HCT116 (cell line): ENCODE measurements at regions of chr11 and their contacts with region 1.

Region 1: DNA sequence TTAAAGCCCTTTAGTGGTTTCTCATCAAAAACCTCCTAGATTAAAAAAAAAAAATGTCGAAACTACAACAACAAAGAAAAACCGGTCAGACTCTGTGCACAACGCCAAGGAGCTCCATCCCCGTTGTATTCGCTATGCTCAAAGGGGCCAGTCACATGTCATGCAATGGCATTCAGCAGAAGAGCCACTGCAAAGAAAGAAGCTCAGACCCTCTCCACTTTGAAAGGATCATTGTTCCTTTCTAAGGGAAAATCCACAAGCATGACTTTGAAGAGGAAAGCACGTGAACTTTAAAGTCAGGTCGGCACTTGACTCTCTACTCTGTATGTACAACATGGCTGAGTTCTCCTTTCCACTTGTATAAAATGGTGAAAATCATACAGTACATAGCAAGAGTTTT is 655.6 kb downstream of the ETS1 start:
- DNase-seq: no peak
- ATAC-seq: no peak
- H3K4me3 ChIP-seq: no peak overlapping the region
- H3K27ac ChIP-seq: no peak overlapping the region
- H3K4me1 ChIP-seq: no peaks in the 10 kb centered on the region
- H3K27me3 ChIP-seq: no peaks in the 10 kb centered on the region
- CTCF ChIP-seq: no peak
- POLR2A ChIP-seq: no peak
- RAD21 ChIP-seq: no peak

Region 2: GRCh38 chr11:127972816-127973215 is 41.0 kb after region 1 on chr11:
- CTCF ChIA-PET with region 1: no interaction called
- POLR2A ChIA-PET with region 1: no interaction called
- RAD21 ChIA-PET with region 1: no interaction called
- intact Hi-C with region 1: loop called (anchors 1 kb)
- DNase-seq: no peak
- ATAC-seq: no peak
- H3K4me3 ChIP-seq: no peak overlapping the region
- H3K27ac ChIP-seq: no peak overlapping the region
- H3K4me1 ChIP-seq: no peaks in the 10 kb centered on the region
- H3K27me3 ChIP-seq: no peaks in the 10 kb centered on the region
- CTCF ChIP-seq: no peak
- POLR2A ChIP-seq: no peak
- RAD21 ChIP-seq: no peak

Region 3: GRCh38 chr11:128365044-128365443 is 433.2 kb after region 1 on chr11:
- CTCF ChIA-PET with region 1: no interaction called
- POLR2A ChIA-PET with region 1: no interaction called
- RAD21 ChIA-PET with region 1: no interaction called
- intact Hi-C with region 1: no loop called
- DNase-seq: no peak
- ATAC-seq: no peak
- H3K4me3 ChIP-seq: no peak overlapping the region
- H3K27ac ChIP-seq: no peak overlapping the region
- H3K4me1 ChIP-seq: no peaks in the 10 kb centered on the region
- H3K27me3 ChIP-seq: peaks cover 21% of the 10 kb centered on the region; the same call in 1 of the 2 replicates
- CTCF ChIP-seq: no peak
- POLR2A ChIP-seq: no peak
- RAD21 ChIP-seq: no peak